ENCODE measurements at regions of chr2 and their contacts with region 1.

Region 1: DNA sequence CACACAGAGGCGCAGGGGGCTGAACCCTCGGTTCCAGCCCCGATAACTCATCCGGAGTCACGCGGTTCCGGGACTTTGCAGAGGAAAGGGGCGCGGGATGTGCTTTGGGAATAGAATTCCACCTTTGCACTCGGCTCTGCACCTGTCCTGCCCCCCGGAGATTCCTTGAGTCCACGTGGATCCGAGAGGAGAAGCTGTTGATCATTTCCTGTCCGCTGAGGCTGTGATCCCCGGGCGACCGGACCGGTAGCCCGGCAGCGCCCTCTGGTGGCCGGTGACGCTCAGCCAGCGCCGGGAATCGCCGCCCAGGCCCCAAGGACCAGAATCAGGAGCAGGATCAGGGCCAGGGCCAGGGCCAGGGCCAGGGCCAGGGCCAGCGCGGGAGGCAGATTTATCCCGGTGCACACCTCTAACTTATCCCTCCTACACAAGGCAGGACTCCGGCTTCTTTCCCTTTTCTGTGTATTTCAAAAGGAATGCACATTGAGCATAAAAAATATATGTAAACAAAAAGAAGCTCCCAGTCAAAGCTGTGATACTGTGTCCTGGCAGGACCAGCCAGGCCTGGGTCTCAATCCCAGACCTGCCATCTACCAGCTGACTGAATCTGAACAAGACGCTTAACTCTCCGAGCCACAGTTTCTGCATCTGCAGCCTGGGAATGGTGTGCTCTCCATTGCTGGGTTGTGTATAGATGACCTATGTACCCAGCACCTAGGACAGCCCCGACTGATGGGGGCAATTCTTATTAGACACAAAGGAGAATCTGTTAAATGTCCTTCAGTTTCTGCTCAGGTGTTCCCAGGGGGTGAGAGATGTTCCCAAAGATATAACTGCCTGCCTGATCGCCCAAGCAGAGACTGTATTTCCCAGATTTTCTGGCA is 8.5 kb upstream of the SPATA3 start:
- DNase-seq: peak; percentile 15 to 85 (median 66)
- ATAC-seq: peak; percentile 77 to 83 (median 82)
- H3K4me3 ChIP-seq: peak overlapping the region; percentile 56 to 67
- H3K4me3 Mint-ChIP-seq: peak overlapping the region; percentile 56 to 70 (median 58)
- H3K27ac ChIP-seq: no peak overlapping the region
- H3K27ac Mint-ChIP-seq: no peak overlapping the region
- H3K4me1 ChIP-seq: peaks cover 0 to 30% of the 10 kb centered on the region in 2 experiments
- H3K4me1 Mint-ChIP-seq: peaks cover 4 to 24% (median 15%) of the 10 kb centered on the region in 3 donors
- H3K27me3 ChIP-seq: peaks cover 4 to 33% of the 10 kb centered on the region in 2 experiments
- H3K27me3 Mint-ChIP-seq: peaks cover 9 to 10% of the 10 kb centered on the region in 2 donors

Region 2: GRCh38 chr2:230824406-230824978 is 162.9 kb before region 1 on chr2:
- CTCF ChIA-PET with region 1: interaction called, 6 to 26 read pairs
- POLR2A ChIA-PET with region 1: no interaction called
- DNase-seq: peak in 33 of 35 experiments; percentile 3 to 90 (median 33)
- ATAC-seq: peak; percentile 69 to 84 (median 74)
- H3K4me3 ChIP-seq: peak overlapping the region in 1 of 2 donors; percentile 24
- H3K4me3 Mint-ChIP-seq: peak overlapping the region in 2 of 3 donors; percentile 16 to 25
- H3K27ac ChIP-seq: no peak overlapping the region
- H3K27ac Mint-ChIP-seq: peak overlapping the region in 1 of 2 donors; percentile 39
- H3K4me1 ChIP-seq: peaks cover 0 to 21% of the 10 kb centered on the region in 2 experiments
- H3K4me1 Mint-ChIP-seq: peaks cover 6 to 13% (median 6%) of the 10 kb centered on the region in 3 donors
- H3K27me3 ChIP-seq: peaks cover 0 to 37% of the 10 kb centered on the region in 2 experiments
- H3K27me3 Mint-ChIP-seq: peaks cover 24 to 34% of the 10 kb centered on the region in 2 donors

Region 3: DNA sequence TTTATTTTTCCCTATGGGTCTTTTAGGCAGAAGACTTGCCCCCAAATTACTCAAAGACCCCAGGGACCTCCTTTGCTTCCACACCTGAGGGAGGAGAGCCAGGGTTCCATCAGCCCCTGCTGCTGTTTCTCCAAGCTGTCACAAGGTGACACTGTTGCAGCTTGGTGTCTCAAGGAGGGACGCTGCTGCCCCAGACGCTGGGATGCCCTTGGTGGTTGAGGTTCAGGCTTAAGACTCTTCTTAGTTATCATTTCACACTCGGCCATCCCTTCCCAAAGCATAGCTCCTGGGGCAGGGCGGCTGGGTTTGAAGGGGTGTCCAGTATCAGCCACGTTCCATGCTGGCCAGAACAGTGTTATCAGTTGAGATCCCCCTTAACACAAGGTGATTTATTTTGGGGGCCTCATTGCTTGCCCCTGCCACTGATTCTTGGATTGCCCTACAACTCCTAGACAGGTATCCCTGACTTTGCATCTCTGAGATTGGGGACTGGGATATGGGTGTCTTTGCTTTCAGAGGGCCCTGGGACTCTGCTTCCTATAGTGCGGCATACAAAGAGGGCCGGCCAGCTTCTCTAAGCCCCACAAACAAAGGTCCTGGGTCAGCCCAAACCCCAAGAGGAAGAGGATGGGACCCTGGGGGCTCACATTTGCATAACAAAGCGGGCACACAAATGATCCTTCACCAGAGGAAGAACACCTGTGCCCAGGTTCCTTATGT is 85.0 kb before region 1 on chr2:
- CTCF ChIA-PET with region 1: interaction called, 6 to 16 read pairs
- POLR2A ChIA-PET with region 1: interaction called in 1 of 2 experiments, 7 read pairs
- DNase-seq: peak in 22 of 35 experiments; percentile 15 to 65 (median 42)
- ATAC-seq: peak in 1 of 4 experiments; percentile 38
- H3K4me3 ChIP-seq: no peak overlapping the region
- H3K4me3 Mint-ChIP-seq: no peak overlapping the region
- H3K27ac ChIP-seq: no peak overlapping the region
- H3K27ac Mint-ChIP-seq: no peak overlapping the region
- H3K4me1 ChIP-seq: peaks cover 8 to 23% of the 10 kb centered on the region in 2 experiments
- H3K4me1 Mint-ChIP-seq: peaks cover 29 to 32% (median 29%) of the 10 kb centered on the region in 3 donors
- H3K27me3 ChIP-seq: peaks cover 0 to 22% of the 10 kb centered on the region in 2 experiments
- H3K27me3 Mint-ChIP-seq: peaks cover 0 to 7% of the 10 kb centered on the region in 2 donors

Region 4: DNA sequence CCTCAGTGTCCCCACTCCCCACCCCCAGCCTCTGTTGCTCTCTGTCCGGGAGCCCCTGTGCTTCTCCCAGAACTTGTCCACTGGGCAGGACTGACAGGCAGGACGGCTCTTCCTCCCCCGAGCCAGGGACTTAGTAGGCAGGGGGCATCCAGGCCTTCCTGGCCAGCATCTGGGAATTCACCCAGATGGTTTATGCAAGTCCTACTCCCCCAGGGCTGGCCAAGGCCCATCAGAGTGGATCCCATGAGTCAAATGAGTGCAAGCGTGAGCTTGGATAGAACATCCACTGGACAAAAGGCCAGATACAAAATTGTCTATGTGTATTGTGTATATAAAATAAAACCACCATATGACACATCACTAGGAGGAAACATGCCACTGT is 535.4 kb after region 1 on chr2:
- CTCF ChIA-PET with region 1: no interaction called
- POLR2A ChIA-PET with region 1: no interaction called
- DNase-seq: no peak
- ATAC-seq: no peak
- H3K4me3 ChIP-seq: no peak overlapping the region
- H3K4me3 Mint-ChIP-seq: no peak overlapping the region
- H3K27ac ChIP-seq: no peak overlapping the region
- H3K27ac Mint-ChIP-seq: no peak overlapping the region
- H3K4me1 ChIP-seq: peaks cover 0 to 50% of the 10 kb centered on the region in 2 experiments
- H3K4me1 Mint-ChIP-seq: peaks cover 23 to 48% (median 26%) of the 10 kb centered on the region in 3 donors
- H3K27me3 ChIP-seq: no peaks in the 10 kb centered on the region
- H3K27me3 Mint-ChIP-seq: no peaks in the 10 kb centered on the region